MCF 10A (cell line): ENCODE measurements at regions of chr3 and their contacts with region 1.

Region 1: DNA sequence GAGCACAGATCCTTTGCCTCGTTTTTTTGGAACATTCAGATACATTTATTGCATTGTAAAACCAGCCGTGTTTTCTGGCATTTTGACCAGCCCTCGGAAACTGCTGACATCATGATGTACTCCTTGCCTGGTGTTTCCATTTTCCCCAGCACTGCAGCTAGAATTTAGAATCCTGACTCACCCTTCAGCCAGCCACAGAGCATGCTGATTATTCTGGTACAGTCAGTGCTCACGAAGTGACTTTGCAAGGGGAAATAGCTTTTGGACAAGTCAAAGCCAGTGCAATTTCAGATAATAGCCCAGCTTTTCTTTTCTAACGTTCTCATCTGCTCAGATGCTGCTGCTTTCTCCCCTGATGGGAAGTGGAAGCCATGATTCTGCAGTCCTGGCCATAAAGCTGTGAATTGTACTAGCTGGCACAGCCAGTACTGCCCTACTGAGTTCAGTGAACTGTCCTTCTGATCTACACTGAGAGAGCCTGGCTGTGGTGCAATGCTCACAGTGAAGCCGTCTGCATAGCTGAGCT is 12.1 kb upstream of the CNBP start:
- DNase-seq: peak; percentile 83
- H3K4me3 Mint-ChIP-seq: peak overlapping the region; percentile 50
- H3K27ac Mint-ChIP-seq: peak overlapping the region; percentile 57
- H3K4me1 Mint-ChIP-seq: peaks cover 9% of the 10 kb centered on the region
- H3K27me3 Mint-ChIP-seq: no peaks in the 10 kb centered on the region
- CTCF ChIP-seq: no peak

Region 2: DNA sequence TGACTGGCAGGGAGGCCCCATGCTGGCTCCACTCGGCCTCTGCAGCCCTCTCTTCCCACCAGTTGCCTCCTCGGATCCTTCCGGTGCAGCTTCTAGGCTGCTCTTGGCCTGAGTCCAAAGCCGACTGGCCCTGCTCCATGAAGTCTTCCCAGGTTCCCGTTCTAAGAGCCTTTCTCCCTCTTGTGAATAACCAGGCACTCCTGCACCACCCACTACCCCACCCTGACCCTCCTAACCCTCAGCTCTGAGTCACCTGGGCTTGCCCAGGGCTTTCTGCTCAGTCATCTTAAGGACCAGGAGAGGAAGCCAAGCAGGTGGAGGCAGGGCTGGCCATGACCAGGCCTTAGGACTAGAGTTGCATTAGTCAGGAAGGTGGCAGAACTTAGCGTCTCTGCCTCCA is 16.0 kb after region 1 on chr3:
- CTCF ChIA-PET with region 1: interaction called, 4 read pairs
- POLR2A ChIA-PET with region 1: interaction called, 65 read pairs
- intact Hi-C with region 1: no loop called
- DNase-seq: peak; percentile 98
- H3K4me3 Mint-ChIP-seq: peak overlapping the region; percentile 12
- H3K27ac Mint-ChIP-seq: peak overlapping the region; percentile 63
- H3K4me1 Mint-ChIP-seq: peaks cover 12% of the 10 kb centered on the region
- H3K27me3 Mint-ChIP-seq: no peaks in the 10 kb centered on the region
- CTCF ChIP-seq: no peak

Region 3: DNA sequence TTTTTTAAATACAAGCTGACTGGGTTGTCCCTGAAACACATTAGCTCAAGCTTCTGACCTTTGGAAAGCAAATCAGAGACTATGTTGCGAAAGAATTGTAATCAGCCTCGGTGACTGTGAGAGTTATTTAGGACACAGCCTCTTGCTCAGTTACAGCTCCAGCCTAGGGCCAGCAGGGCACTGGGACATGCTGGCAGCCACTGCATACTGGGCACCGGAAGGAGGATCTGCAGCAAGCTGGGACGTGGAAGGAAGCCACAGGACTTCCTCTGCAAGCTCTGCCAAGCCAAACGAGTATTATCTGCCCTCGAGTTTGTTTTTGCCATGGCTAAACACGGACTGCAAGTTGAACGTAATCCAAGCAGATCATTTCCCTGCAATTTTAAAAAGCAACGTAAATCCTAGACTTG is 29.2 kb after region 1 on chr3:
- CTCF ChIA-PET with region 1: interaction called, 8 read pairs
- POLR2A ChIA-PET with region 1: interaction called, 75 read pairs
- intact Hi-C with region 1: no loop called
- DNase-seq: peak; percentile 91
- H3K4me3 Mint-ChIP-seq: peak overlapping the region; percentile 41
- H3K27ac Mint-ChIP-seq: peak overlapping the region; percentile 80
- H3K4me1 Mint-ChIP-seq: peaks cover 23% of the 10 kb centered on the region
- H3K27me3 Mint-ChIP-seq: no peaks in the 10 kb centered on the region
- CTCF ChIP-seq: no peak

Region 4: DNA sequence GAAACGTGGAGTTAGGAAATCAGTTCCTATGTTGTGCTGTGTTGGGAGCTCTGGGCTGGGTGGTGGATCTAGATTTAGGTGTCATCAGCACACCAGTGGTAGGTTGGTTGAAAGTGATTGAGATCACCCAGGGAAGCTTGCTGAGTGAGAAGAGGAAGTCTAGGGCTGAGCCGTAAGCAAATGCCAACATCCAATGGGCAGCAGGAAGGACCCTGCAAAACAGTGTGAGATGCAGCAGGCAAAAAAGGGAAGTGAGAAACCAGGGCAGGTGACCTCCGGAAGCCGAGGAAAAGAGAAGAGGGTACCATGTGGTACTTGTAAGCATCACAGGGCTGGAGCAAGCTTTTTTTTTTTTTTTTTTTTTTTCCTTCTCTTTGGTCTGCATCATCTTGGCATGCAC is 37.7 kb after region 1 on chr3:
- CTCF ChIA-PET with region 1: interaction called, 9 read pairs
- POLR2A ChIA-PET with region 1: interaction called, 39 read pairs
- intact Hi-C with region 1: no loop called
- DNase-seq: no peak
- H3K4me3 Mint-ChIP-seq: no peak overlapping the region
- H3K27ac Mint-ChIP-seq: no peak overlapping the region
- H3K4me1 Mint-ChIP-seq: peaks cover 28% of the 10 kb centered on the region
- H3K27me3 Mint-ChIP-seq: no peaks in the 10 kb centered on the region
- CTCF ChIP-seq: no peak

Region 5: DNA sequence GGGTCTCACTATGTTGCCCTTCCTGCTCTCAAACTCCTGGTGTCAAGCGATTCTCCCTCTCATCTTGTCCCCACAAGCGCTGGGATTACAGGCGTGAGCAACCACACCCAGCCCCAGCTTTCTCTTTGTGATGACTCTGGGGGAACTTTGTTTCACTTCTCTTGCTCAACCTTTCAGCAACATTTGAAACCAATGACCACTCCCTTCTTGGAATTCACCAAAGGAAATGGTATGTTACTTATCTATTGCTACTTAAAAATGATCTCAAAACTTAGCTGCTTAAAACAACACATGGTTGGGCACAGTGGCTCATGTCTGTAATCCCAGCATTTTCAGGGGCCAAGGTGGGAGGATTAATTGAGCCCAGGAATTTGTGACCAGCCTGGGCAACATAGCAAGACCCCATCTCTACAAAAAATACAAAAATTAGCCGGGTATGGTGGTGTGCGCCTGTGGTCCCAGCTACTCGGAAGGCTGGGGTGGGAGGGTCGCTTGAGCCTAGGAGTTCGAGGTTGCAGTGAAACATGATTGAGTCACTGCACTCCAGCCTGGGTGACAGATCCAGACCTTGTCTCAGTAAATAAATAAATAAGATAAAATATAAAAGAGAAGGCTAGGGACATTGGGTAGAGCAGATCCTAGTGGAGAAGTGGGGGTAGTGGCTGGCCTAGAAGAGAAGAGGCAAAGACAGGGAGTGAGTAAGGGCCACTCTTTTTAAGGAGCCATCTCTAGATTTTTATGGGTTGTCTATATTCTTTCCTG is 43.3 kb after region 1 on chr3:
- CTCF ChIA-PET with region 1: interaction called, 9 read pairs
- POLR2A ChIA-PET with region 1: interaction called, 37 read pairs
- intact Hi-C with region 1: no loop called
- DNase-seq: peak; percentile 77
- H3K4me3 Mint-ChIP-seq: peak overlapping the region; percentile 54
- H3K27ac Mint-ChIP-seq: peak overlapping the region; percentile 96
- H3K4me1 Mint-ChIP-seq: peaks cover 19% of the 10 kb centered on the region
- H3K27me3 Mint-ChIP-seq: no peaks in the 10 kb centered on the region
- CTCF ChIP-seq: no peak

Region 6: DNA sequence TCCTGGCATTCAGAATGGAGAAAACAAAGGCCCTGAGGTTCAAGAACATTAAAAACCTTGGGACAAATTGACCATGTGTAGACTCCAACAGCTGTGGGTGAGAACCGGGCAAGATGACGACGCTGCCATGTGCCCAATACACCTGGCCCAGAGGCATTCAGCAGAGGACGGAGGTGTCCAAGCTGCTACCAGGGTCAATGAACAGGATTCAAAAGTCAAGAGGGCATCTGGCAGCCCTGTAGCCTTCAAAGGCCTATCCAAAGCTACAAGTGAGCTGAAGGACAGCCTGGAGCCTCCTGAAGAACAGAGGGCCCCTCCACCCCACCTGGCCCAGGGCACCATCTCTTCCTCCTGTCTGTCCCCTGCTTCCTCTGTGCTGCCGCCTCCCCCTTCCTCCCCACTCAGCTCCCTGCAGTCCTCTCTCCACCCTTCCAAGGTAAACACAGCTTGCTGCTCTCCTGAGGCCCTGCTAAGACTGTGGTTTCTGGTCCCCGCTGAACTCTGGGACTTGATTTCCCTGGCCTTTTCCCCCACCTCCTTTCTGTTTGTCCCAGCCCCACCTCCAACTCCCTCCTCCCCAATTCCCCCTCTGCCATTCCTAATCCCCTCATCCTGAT is 140.4 kb after region 1 on chr3:
- CTCF ChIA-PET with region 1: no interaction called
- POLR2A ChIA-PET with region 1: no interaction called
- intact Hi-C with region 1: no loop called
- DNase-seq: no peak
- H3K4me3 Mint-ChIP-seq: no peak overlapping the region
- H3K27ac Mint-ChIP-seq: no peak overlapping the region
- H3K4me1 Mint-ChIP-seq: no peaks in the 10 kb centered on the region
- H3K27me3 Mint-ChIP-seq: no peaks in the 10 kb centered on the region
- CTCF ChIP-seq: no peak

Region 7: DNA sequence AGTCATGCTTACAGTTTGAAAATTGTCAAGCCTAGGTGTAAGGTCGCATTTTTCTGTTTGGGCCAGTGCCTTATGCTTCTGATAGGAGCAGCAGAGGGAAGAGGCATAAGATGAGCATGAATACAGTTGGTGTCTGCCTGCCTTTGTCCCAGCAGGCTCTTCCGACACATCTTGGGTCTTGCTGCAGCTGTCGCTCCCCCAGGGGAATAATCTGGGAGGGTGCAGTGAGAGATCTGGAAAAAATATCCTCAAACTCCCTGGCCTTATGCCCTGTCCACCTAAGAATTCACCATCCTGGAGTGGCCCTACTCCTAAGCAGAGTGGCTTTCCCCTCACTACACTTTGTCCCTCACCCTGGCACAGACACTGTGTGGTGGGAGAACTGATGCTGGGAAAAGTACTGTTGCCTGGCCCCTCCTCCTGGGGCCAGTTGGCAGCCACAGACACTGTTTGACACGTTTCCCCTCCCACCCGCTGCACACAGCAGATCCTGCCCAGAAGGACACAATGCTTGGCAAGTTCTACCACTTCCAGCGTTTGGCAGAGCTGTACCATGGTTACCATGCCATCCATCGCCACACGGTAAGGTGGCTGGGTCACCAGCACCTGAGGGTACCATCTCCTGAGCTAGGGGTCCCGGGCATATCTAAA is 311.5 kb after region 1 on chr3:
- CTCF ChIA-PET with region 1: no interaction called
- POLR2A ChIA-PET with region 1: no interaction called
- intact Hi-C with region 1: no loop called
- DNase-seq: no peak
- H3K4me3 Mint-ChIP-seq: no peak overlapping the region
- H3K27ac Mint-ChIP-seq: no peak overlapping the region
- H3K4me1 Mint-ChIP-seq: no peaks in the 10 kb centered on the region
- H3K27me3 Mint-ChIP-seq: no peaks in the 10 kb centered on the region
- CTCF ChIP-seq: no peak